ENCODE measurements at regions of chr14 and their contacts with region 1.

Region 1: DNA sequence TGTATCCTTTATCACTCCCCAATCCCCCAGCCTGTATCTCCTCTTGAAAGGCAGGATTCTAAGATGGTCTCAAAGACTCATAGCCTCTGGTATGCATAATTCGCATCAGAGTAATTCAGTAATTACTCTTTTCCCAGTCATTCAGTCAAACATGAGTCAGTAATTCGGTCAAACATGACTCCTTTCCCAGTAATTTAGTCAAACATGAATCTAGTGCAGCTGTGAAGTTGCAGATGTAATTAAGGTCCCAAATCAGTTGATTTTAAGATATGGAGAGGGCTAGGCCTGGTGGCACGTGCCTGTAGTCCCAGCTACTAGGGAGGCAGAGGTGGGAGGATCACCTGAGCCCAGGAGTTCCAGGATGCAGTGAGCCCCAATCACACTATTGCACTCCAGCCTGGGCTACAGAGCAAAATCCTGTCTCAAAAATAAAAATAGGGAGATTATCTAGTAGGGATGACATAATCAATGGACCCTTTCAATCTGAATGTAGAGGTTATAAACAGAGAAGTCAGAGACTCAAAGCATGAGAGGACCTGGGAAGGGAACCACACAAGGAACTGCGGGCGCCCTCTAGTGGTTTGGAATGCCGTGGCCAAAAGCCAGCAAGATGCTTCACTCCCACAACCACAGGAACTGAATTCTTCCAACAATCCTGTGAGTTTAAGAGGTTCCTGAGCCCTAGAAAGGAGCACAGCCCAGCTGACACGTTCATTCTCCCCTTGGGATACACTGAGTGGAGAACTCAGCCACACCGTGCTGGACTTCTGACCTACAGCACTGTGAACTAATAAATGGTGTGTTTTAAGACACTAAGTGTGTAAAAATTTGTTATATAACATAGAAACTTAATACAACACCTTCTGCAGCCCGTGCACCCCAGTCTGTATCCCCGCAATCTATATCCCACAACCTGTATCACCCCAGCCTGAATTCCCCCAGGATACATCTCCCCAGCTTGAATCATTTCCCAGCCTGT is 14.3 kb upstream of the ARMH4 start:
- DNase-seq: peak; percentile 95

Region 2: DNA sequence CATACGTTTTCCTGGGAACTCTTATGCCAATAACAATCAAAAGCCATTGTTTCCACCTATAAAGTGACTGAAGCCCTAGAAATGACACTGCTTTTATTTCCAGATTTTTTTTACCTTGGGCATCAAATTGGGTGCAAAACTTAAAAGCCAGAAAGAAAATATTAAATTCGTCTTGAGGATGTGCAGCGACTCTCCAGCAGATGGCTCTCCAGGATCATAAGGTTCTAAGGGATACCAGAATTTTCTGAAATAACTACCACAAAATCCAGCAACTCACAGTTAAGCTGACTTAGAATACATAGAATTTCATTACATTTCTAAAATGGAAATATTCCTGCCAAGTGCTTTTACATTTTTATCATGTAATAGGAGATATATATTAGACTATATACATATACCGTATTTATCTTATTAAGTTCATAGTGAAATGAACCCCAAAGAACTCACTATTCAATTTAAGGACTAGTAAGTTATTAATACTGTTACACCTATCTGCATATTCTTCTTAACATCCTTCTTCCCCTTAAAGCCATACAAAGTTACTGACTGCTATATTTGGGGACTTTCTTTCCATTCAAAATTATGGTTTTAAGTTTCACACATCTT is 58.2 kb before region 1 on chr14:
- intact Hi-C with region 1: loop called (anchors 5 kb)
- DNase-seq: no peak

Region 3: DNA sequence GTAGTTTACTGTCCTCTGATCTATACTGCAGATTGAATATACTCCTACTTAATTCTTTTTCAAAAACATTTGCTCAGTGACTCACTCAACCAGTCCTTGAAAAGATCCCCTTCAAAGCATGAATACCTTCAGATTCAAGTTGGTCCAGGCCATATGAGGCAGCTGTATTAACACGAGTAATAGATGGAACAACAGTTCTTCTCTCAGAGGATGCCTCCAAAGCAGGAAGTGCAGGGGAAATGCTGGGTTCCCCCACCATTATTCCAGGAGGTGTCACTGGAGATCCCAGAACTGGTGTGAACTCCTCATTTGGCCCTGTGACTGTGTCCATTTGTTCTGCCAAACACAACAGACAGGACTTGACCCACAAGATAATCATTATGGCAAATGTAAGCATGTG is 34.9 kb before region 1 on chr14:
- intact Hi-C with region 1: no loop called
- DNase-seq: no peak

Measured in posterior vena cava (tissue), 2 donors.